ENCODE measurements at regions of chr5 and their contacts with region 1.

Region 1: DNA sequence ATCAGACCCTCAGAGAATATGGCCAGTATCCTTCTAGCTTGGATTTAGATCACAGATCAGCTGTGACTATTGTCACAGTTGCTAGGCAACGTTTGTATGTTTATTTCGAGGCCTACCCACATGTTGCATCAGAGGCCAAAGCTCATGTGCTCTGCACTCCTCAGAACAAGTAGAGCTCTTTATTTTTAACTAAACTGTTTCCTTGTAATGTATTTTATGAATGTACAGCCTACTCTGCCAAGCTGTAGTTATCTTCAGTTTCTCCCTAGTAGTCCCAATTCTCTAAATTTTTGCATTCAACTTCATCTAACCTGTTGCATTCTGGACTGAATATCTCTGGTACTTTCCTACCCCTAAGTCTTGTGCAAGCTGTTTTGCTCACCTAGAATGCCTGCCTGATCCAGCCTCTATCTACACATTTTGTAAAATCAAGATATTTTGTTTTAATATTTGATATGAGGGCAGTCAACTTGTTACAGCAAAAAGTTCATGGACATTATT is 52.8 kb downstream of the CAST start:
- DNase-seq: peak; percentile 30 to 79
- ATAC-seq: peak; percentile 79 to 82 (median 81)
- H3K4me3 ChIP-seq: no peak overlapping the region
- H3K4me3 Mint-ChIP-seq: no peak overlapping the region
- H3K27ac ChIP-seq: peak overlapping the region; percentile 81
- H3K27ac Mint-ChIP-seq: peak overlapping the region; percentile 82 to 89
- H3K4me1 ChIP-seq: peaks cover 25% of the 10 kb centered on the region
- H3K4me1 Mint-ChIP-seq: peaks cover 65 to 71% of the 10 kb centered on the region in 2 donors
- H3K27me3 ChIP-seq: no peaks in the 10 kb centered on the region
- H3K27me3 Mint-ChIP-seq: no peaks in the 10 kb centered on the region
- CTCF ChIP-seq: no peak

Region 2: GRCh38 chr5:96601811-96602244 is 113.2 kb before region 1 on chr5:
- intact Hi-C with region 1: no loop called
- DNase-seq: peak in 1 of 2 donors; percentile 82
- ATAC-seq: peak; percentile 81 to 93 (median 90)
- H3K4me3 ChIP-seq: no peak overlapping the region
- H3K4me3 Mint-ChIP-seq: no peak overlapping the region
- H3K27ac ChIP-seq: no peak overlapping the region
- H3K27ac Mint-ChIP-seq: no peak overlapping the region
- H3K4me1 ChIP-seq: peaks cover 3% of the 10 kb centered on the region
- H3K4me1 Mint-ChIP-seq: no peaks in the 10 kb centered on the region
- H3K27me3 ChIP-seq: peaks cover 4% of the 10 kb centered on the region
- H3K27me3 Mint-ChIP-seq: peaks cover 4 to 15% of the 10 kb centered on the region in 2 donors
- CTCF ChIP-seq: peak; percentile 85

Region 3: GRCh38 chr5:96662725-96663513 is 52.1 kb before region 1 on chr5:
- intact Hi-C with region 1: loop called (anchors 2 kb)
- DNase-seq: peak; percentile 82 to 88
- ATAC-seq: peak; percentile 64 to 81 (median 68)
- H3K4me3 ChIP-seq: peak overlapping the region; percentile 83
- H3K4me3 Mint-ChIP-seq: peak overlapping the region; percentile 95
- H3K27ac ChIP-seq: peak overlapping the region; percentile 96
- H3K27ac Mint-ChIP-seq: peak overlapping the region; percentile 98 to 99
- H3K4me1 ChIP-seq: peaks cover 33% of the 10 kb centered on the region
- H3K4me1 Mint-ChIP-seq: peaks cover 74 to 80% of the 10 kb centered on the region in 2 donors
- H3K27me3 ChIP-seq: no peaks in the 10 kb centered on the region
- H3K27me3 Mint-ChIP-seq: no peaks in the 10 kb centered on the region
- CTCF ChIP-seq: no peak

Measured in natural killer cell (primary cell).